Mammary epithelial cell (primary cell): ENCODE measurements at regions of chr11 and their contacts with region 1.

Region 1: DNA sequence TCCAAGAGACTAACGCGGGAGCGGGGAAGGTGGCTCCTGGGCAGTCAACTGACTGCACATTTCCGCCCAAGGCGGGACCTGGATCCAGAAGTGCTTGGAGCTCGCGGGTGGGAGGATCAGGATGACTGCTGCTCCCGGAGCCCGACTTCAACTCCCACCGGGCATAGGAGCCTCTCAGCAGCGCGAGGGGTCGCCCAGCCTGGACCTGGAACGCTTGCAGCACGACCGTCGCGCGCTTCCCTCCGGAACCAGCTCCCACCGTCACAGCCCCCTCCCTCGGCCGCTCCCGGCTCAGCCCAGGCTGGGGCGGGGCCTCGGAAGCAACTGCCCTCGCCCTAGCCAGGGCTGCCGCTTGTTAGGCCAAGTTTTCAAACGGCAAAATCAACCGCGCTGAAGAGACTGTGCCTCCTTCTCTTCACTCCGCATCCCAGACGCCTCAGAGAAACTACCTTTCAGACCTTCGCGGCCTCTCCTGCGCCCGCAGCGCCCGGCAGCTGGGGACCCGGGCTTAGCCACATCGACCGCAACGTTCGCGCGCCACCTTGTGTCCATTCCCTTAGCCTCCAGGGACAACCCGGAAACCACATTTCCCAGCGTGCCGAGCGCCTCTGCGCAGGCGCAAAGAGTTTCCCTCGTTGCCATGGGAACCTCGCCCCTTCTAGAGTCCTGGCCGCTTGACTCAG is 14.0 kb downstream of the SSH3 start:
- DNase-seq: peak; percentile 94
- H3K4me3 ChIP-seq: peak overlapping the region; percentile 75 to 86 (median 79)
- H3K27ac ChIP-seq: peak overlapping the region; percentile 85
- H3K4me1 ChIP-seq: peaks cover 27% of the 10 kb centered on the region
- H3K27me3 ChIP-seq: no peaks in the 10 kb centered on the region
- CTCF ChIP-seq: peak; percentile 82 to 94

Region 2: DNA sequence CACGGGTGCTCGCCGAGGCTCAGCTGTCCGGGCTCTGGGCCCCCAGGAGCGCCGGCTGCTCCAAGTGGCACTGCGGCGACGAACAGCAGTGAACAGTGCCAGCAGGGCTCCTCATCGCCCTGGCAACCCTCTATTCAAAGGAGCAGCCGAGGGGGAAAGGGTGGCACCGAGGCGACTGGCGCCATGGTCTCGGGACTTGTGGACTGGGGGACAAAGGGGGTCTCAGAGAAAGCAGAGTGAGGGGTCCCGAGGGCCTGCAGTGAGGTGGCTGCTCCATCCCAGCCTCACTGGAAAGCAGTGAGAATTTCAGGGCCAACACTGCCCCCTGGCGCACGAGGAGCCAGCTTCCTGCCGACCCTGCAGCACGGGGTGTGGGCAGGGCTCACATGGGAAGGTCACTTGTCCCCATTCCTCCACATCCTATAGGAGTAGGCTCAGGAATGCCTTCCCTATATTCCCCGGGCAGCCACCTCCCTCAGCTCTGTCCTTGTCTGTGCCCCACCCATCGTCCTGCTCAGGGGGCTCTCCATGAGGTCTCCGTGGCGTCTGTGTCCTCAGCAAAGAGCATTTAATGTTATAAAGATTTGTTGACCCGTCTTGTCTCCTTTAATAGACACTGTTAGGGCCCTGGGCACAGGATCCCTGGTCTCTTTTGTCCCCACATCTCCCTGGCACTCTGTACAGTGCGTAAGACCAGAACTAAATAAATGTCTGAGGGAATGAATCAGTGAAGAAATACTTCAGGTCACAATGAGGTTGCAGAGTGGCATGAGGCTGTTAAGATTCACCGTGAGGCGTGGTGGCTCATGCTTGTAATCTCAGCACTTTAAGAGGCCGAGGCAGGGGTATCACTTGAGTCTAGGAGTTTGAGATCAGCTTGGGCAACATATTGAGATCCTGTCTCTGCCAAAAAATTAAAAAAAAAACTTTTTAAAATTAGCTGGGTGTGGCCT is 434.1 kb before region 1 on chr11:
- CTCF ChIA-PET with region 1: no interaction called
- dilution Hi-C with region 1: loop called (anchors 5 kb)
- in situ Hi-C with region 1: no loop called
- intact Hi-C with region 1: no loop called
- DNase-seq: peak; percentile 60
- H3K4me3 ChIP-seq: no peak overlapping the region
- H3K27ac ChIP-seq: no peak overlapping the region
- H3K4me1 ChIP-seq: peaks cover 38% of the 10 kb centered on the region
- H3K27me3 ChIP-seq: no peaks in the 10 kb centered on the region
- CTCF ChIP-seq: peak; percentile 62 to 76

Region 3: GRCh38 chr11:67082035-67082791 is 235.1 kb before region 1 on chr11:
- CTCF ChIA-PET with region 1: no interaction called
- dilution Hi-C with region 1: no loop called
- in situ Hi-C with region 1: no loop called
- intact Hi-C with region 1: loop called (anchors 1 kb)
- DNase-seq: no peak
- H3K4me3 ChIP-seq: no peak overlapping the region
- H3K27ac ChIP-seq: no peak overlapping the region
- H3K4me1 ChIP-seq: peaks cover 30% of the 10 kb centered on the region
- H3K27me3 ChIP-seq: no peaks in the 10 kb centered on the region
- CTCF ChIP-seq: peak in 1 of 2 donors; percentile 24

Region 4: DNA sequence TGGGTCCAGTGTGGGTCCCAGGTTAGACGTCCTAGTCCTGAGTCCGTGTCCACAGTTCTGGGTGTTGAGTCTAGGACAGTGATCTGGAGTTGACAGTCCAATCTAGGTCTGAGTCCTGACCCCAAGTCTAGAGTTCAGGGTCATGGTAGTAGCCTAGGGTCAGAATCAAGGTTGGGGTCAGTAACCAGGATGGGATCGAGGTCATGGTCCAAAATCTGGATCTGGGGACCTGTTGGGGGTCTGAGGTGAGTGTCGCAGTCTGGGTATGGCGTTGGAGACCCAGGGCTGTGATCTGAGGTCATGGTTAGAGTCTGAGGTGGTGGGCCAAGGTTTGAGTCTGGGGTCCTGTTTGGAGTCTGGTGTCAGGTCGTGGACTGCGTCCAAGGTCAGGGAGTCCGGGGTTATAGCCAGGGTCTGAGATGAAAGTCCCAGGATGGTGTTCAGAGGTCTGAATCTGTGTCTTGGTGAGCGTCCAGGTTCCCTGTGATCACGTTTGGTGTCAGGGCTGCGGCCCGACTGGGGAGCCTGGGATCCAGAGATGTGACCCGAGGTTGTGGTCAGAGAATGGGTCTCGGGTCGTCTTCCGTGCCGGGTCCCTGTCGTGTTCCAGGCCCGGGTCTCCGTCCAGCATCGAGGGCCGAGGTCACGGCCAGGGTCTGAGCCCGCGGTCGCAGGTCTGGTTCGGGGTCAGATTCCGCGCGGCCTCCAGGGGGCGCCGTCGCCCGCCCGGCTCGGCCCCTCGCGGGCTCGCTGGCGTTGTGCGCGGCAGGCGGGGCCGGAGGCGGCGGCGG is 51.5 kb before region 1 on chr11:
- CTCF ChIA-PET with region 1: interaction called, 9 read pairs
- dilution Hi-C with region 1: loop called (anchors 5 kb)
- in situ Hi-C with region 1: loop called (anchors 5 kb)
- intact Hi-C with region 1: loop called (anchors 1 kb)
- DNase-seq: peak; percentile 46
- H3K4me3 ChIP-seq: peak overlapping the region in 2 of 3 experiments; percentile 20 to 33
- H3K27ac ChIP-seq: no peak overlapping the region
- H3K4me1 ChIP-seq: peaks cover 62% of the 10 kb centered on the region
- H3K27me3 ChIP-seq: no peaks in the 10 kb centered on the region
- CTCF ChIP-seq: peak; percentile 36 to 65

Region 5: GRCh38 chr11:67345920-67346799 is 28.8 kb after region 1 on chr11:
- CTCF ChIA-PET with region 1: interaction called, 5 read pairs
- dilution Hi-C with region 1: no loop called
- in situ Hi-C with region 1: no loop called
- intact Hi-C with region 1: loop called (anchors 2 kb)
- DNase-seq: peak; percentile 92
- H3K4me3 ChIP-seq: no peak overlapping the region
- H3K27ac ChIP-seq: peak overlapping the region; percentile 77
- H3K4me1 ChIP-seq: peaks cover 21% of the 10 kb centered on the region
- H3K27me3 ChIP-seq: no peaks in the 10 kb centered on the region
- CTCF ChIP-seq: peak; percentile 79 to 97

Region 6: GRCh38 chr11:67420646-67421420 is 103.5 kb after region 1 on chr11:
- CTCF ChIA-PET with region 1: no interaction called
- dilution Hi-C with region 1: loop called (anchors 5 kb)
- in situ Hi-C with region 1: no loop called
- intact Hi-C with region 1: no loop called
- DNase-seq: peak; percentile 91
- H3K4me3 ChIP-seq: peak overlapping the region; percentile 26 to 63 (median 53)
- H3K27ac ChIP-seq: no peak overlapping the region
- H3K4me1 ChIP-seq: peaks cover 32% of the 10 kb centered on the region
- H3K27me3 ChIP-seq: no peaks in the 10 kb centered on the region
- CTCF ChIP-seq: no peak

Region 7: GRCh38 chr11:67545280-67545679 is 227.9 kb after region 1 on chr11:
- CTCF ChIA-PET with region 1: no interaction called
- dilution Hi-C with region 1: no loop called
- in situ Hi-C with region 1: no loop called
- intact Hi-C with region 1: no loop called
- DNase-seq: no peak
- H3K4me3 ChIP-seq: no peak overlapping the region
- H3K27ac ChIP-seq: no peak overlapping the region
- H3K4me1 ChIP-seq: no peaks in the 10 kb centered on the region
- H3K27me3 ChIP-seq: no peaks in the 10 kb centered on the region
- CTCF ChIP-seq: no peak